AG04449 (cell line): ENCODE measurements at regions of chr1 and their contacts with region 1.

Region 1: GRCh38 chr1:201559679-201560162 is 20.8 kb downstream of the NAV1 start:
- DNase-seq: no peak
- H3K4me3 ChIP-seq: no peak overlapping the region
- CTCF ChIP-seq: peak; percentile 96

Region 2: GRCh38 chr1:200819726-200820125 is 740.0 kb before region 1 on chr1:
- CTCF ChIA-PET with region 1: no interaction called
- POLR2A ChIA-PET with region 1: no interaction called
- DNase-seq: no peak
- H3K4me3 ChIP-seq: no peak overlapping the region
- CTCF ChIP-seq: no peak

Region 3: GRCh38 chr1:201426479-201427310 is 133.0 kb before region 1 on chr1:
- CTCF ChIA-PET with region 1: no interaction called
- POLR2A ChIA-PET with region 1: no interaction called
- DNase-seq: no peak
- H3K4me3 ChIP-seq: no peak overlapping the region
- CTCF ChIP-seq: no peak

Region 4: GRCh38 chr1:201496296-201496690 is 63.4 kb before region 1 on chr1:
- CTCF ChIA-PET with region 1: no interaction called
- POLR2A ChIA-PET with region 1: no interaction called
- DNase-seq: no peak
- H3K4me3 ChIP-seq: no peak overlapping the region
- CTCF ChIP-seq: no peak

Region 5: GRCh38 chr1:201530741-201531531 is 28.8 kb before region 1 on chr1:
- CTCF ChIA-PET with region 1: interaction called, 39 read pairs
- POLR2A ChIA-PET with region 1: no interaction called
- DNase-seq: peak; percentile 40
- H3K4me3 ChIP-seq: no peak overlapping the region
- CTCF ChIP-seq: peak; percentile 87

Region 6: GRCh38 chr1:201582705-201583442 is 23.2 kb after region 1 on chr1:
- CTCF ChIA-PET with region 1: interaction called, 7 read pairs
- POLR2A ChIA-PET with region 1: interaction called, 16 read pairs
- DNase-seq: no peak
- H3K4me3 ChIP-seq: no peak overlapping the region
- CTCF ChIP-seq: no peak

Region 7: DNA sequence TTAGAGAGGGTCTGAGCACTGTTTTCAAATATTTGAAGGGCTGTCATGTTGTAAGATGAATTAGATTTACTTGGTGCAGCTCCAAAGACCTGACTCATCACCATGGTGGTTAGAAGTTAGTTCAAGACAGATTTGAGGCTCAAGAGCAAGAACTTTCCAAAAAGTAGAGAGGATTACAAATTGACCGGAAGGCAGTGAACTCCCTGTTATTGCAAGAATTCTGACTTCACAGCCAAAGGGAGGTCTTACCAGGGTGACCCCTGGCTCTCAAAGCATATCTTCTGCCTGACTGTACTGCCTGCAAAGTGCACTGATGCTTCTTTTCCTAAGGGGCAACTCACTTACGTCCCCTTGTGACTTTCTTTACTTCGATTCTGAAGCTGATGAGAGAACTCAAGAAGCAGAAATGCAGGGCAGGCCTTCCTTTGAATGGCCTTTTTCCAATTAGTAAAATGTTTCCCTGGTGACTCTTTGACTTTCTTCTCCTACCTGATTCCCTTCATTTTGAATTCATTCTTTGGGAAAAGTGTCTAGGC is 65.6 kb after region 1 on chr1:
- CTCF ChIA-PET with region 1: interaction called, 49 read pairs
- POLR2A ChIA-PET with region 1: no interaction called
- DNase-seq: peak; percentile 92
- H3K4me3 ChIP-seq: no peak overlapping the region
- CTCF ChIP-seq: peak; percentile 35

Region 8: GRCh38 chr1:201649761-201650622 is 90.3 kb after region 1 on chr1:
- CTCF ChIA-PET with region 1: interaction called, 105 read pairs
- POLR2A ChIA-PET with region 1: interaction called, 11 read pairs
- DNase-seq: no peak
- H3K4me3 ChIP-seq: peak overlapping the region; percentile 79
- CTCF ChIP-seq: no peak

Region 9: DNA sequence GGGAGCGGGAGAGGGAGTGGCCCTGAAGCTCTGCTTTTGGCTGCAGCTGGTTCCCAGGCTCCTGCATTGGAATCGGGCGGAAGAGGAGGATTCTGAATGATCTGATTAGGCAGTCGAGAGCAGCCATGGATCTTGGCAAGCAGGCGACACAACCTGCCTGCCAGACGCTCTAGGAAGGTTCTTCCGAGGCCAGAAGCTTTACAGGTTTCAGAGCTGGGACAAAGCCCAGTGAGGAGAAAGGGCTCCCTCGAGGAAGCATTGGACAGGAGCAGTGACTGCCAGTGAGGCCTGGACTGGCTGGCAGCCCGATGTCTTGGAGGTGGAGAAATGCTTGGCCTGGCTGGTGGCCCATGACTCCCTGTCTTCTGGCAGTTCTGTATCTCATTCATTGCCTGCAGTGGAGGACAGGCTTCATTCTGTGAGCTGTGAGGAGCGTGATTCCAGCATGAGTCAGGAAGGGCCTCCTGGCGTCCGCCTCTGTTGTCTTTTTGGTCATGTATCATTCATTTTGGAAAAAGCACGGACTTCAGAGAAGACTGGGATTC is 136.6 kb after region 1 on chr1:
- CTCF ChIA-PET with region 1: interaction called, 44 read pairs
- POLR2A ChIA-PET with region 1: interaction called, 4 read pairs
- DNase-seq: peak; percentile 74
- H3K4me3 ChIP-seq: peak overlapping the region; percentile 9; the same call in 1 of the 2 replicates
- CTCF ChIP-seq: no peak